Prostate gland (tissue), 2 donors: ENCODE measurements at regions of chr2 and their contacts with region 1.

Region 1: DNA sequence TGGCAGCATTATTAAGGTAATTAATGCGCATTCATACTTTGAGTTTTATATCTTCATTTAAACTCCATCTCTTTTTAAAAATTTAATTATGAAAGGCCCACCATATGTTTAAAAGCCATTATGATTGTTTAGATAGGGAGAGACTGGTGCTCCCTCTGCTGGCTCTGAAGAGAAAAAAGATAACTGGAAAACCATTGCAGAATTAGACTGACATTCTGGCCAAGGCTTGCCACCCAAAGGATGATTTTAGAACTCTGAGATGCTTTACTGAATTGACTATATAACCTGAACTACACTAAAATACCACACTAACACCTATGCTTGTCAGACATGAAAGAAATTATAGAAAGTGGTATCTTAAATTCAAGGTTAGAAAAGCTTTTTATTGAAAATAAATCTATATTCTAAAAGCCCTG is 127.6 kb upstream of the SPOPL start:
- DNase-seq: no peak
- H3K4me3 ChIP-seq: no peak overlapping the region
- H3K27ac ChIP-seq: no peak overlapping the region
- H3K4me1 ChIP-seq: no peaks in the 10 kb centered on the region
- H3K27me3 ChIP-seq: no peaks in the 10 kb centered on the region
- CTCF ChIP-seq: peak in 2 of 4 experiments; percentile 64 to 67
- POLR2A ChIP-seq: no peak

Region 2: GRCh38 chr2:137947728-137948336 is 426.2 kb before region 1 on chr2:
- intact Hi-C with region 1: loop called (anchors 10 kb)
- DNase-seq: peak; percentile 66
- H3K4me3 ChIP-seq: no peak overlapping the region
- H3K27ac ChIP-seq: no peak overlapping the region
- H3K4me1 ChIP-seq: no peaks in the 10 kb centered on the region
- H3K27me3 ChIP-seq: no peaks in the 10 kb centered on the region
- CTCF ChIP-seq: peak in 3 of 4 experiments; percentile 64 to 67 (median 66)
- POLR2A ChIP-seq: no peak

Region 3: DNA sequence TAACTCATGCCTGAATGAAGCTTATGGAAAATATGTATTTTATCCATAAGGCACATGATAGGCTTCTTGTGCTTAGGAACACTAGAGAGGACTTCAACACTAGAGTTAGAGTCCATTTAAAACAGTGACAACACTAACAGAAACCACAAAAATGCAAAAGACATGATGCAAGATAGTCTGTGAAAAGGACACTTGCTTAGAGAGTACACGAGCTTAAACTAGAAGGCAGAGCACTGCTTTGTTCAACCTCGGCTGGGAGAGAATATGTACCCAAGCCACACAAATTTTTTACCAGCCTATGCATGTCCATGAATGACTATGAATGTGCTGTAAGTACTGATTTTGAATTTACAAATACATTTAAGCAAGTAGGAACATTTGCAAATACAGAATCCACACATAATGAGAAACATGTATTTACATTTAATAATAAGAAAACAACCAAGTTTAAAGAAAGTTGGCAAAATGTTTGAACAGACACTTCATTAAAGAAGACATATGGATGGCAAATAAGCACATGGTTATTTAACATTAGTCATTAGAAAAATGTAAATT is 258.1 kb after region 1 on chr2:
- intact Hi-C with region 1: no loop called
- DNase-seq: no peak
- H3K4me3 ChIP-seq: no peak overlapping the region
- H3K27ac ChIP-seq: no peak overlapping the region
- H3K4me1 ChIP-seq: no peaks in the 10 kb centered on the region
- H3K27me3 ChIP-seq: no peaks in the 10 kb centered on the region
- CTCF ChIP-seq: no peak
- POLR2A ChIP-seq: no peak

Region 4: DNA sequence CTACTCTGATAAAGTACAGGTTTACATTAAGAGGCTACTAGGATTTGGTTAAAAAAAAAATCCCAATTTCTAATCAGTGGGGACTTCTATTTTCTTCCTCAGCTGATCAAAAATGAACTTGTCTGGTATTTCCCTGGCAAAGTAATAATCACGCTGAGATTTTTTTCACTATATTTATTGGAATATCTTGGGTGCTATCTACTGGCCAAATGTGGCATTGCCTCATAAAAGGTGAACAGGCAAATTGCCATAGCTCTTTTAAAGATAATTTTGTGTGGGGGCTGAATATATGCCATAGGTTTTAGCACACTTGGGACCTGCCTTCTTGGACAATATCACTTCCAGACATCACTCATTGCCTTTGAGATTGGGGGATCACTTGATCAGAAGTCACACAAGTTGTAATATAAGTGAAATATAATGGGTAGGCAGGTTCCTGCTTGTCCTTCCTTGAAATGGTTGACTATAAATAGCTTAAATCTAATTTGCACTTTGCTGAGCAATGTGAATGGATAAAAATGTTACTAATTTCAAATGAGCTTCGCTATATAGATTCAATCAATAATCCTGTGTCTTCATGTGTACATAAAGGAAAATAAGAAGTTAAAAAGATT is 413.2 kb after region 1 on chr2:
- intact Hi-C with region 1: loop called (anchors 10 kb)
- DNase-seq: no peak
- H3K4me3 ChIP-seq: no peak overlapping the region
- H3K27ac ChIP-seq: no peak overlapping the region
- H3K4me1 ChIP-seq: no peaks in the 10 kb centered on the region
- H3K27me3 ChIP-seq: no peaks in the 10 kb centered on the region
- CTCF ChIP-seq: peak; percentile 33 to 77 (median 66)
- POLR2A ChIP-seq: no peak